ENCODE measurements at regions of chr22 and their contacts with region 1.

Region 1: DNA sequence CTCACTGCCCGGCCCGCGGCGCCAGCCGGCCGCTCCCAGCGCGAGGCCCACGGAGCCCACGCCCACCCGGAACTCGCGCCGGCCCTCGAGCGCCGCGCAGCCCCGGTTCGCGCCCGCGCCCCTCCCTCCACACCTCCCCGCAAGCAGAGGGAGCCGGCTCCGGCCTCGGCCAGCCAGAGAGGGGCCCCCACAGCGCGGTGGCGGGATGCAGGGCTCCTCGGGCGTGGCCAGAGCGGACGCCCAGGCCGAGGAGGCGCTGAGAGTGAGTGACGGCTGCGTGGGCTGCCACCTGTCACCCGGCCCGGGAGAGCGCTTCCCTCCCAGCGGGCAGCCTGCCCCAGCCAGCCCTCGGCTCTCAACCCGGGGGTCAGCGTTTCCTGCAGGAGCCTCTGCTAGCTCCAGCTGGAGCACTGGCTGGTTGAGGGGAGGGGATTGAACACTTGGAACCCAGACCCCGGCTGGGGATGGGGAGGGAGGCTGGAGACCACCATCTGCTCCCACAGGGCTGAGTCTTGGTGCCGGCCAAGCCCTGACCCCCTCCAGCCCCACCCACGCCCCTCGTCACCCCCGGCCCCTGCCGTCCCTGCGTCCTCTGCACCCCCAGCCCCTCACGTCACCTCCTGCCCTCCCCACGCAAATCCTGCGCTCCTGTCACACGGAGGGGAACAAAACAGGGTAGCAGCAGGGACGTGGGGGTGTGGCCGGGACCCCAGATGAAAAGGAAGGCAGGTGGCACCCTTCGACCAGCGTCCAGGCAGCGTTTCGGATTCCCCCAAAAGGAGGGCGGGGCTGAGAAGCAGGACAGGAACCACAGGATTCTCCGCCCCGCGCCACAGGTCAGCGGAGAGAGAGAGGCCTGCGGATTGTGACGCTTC is 157.0 kb downstream of the BRD1 start:
- DNase-seq: peak; percentile 48
- ATAC-seq: peak; percentile 65
- H3K4me3 Mint-ChIP-seq: peak overlapping the region; percentile 76
- H3K27ac Mint-ChIP-seq: no peak overlapping the region
- H3K4me1 Mint-ChIP-seq: peaks cover 26% of the 10 kb centered on the region
- H3K27me3 Mint-ChIP-seq: peaks cover 10% of the 10 kb centered on the region
- CTCF ChIP-seq: no peak

Region 2: GRCh38 chr22:49657275-49657975 is 13.3 kb before region 1 on chr22:
- CTCF ChIA-PET with region 1: no interaction called
- POLR2A ChIA-PET with region 1: interaction called, 3 read pairs
- intact Hi-C with region 1: loop called (anchors 1 kb)
- DNase-seq: peak; percentile 63
- ATAC-seq: peak; percentile 80
- H3K4me3 Mint-ChIP-seq: peak overlapping the region; percentile 96
- H3K27ac Mint-ChIP-seq: peak overlapping the region; percentile 90
- H3K4me1 Mint-ChIP-seq: peaks cover 47% of the 10 kb centered on the region
- H3K27me3 Mint-ChIP-seq: no peaks in the 10 kb centered on the region
- CTCF ChIP-seq: no peak

Measured in activated B cell treated with CpG ODN at 0.5 μM for 24 hours (primary cell).